Activated CD4-positive, alpha-beta T cell treated with anti-CD3 and anti-CD28 coated beads for 36 hours (primary cell): ENCODE measurements at regions of chr6 and their contacts with region 1.

Region 1: GRCh38 chr6:111259089-111259831 is 172.0 kb downstream of the SLC16A10 start:
- DNase-seq: peak; percentile 99
- ATAC-seq: peak; percentile 96
- H3K4me3 Mint-ChIP-seq: peak overlapping the region; percentile 78
- H3K27ac Mint-ChIP-seq: peak overlapping the region; percentile 56
- H3K4me1 Mint-ChIP-seq: peaks cover 30% of the 10 kb centered on the region
- H3K27me3 Mint-ChIP-seq: no peaks in the 10 kb centered on the region

Region 2: DNA sequence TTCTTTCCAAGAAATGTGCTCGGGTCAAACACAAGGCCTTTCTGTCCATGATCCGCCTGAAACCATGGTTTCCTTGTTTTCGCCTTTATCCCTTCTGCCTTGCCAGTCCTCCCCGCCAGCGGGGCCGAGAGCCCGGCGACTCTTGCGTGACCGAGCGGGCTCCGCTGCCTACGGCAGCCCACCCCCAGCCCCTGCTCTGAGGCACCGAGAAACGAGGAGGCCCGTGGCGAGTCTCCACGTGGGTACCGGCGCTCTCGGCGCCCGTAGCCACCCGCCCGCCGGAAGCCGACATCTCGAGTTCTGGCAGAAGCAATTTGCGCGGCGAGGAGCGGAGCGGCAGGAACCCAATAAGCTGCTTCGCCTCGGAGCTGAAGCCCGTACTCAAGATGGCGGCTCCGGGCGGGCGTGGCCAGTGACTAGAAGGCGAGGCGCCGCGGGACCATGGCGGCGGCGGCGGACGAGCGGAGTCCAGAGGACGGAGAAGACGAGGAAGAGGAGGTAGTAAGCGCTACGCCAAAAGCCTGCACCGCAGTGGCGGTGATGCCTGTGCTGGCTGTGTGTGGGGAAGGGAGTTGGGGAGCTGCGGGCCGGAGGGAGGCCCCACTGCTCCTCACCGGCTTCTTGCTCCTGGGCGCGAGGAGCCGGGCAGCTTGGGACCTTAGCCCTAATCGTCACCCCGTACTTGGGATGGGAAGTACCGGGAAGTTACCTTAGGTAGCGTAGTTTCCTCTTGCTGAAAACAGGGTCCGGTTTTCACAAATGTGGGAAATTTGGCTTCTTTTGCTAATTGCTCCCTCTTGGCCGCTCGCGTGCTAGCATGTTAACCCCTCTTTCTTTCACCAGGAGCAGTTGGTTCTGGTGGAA is 300.7 kb before region 1 on chr6 and contains the start of gene GTF3C6:
- CTCF ChIA-PET with region 1: no interaction called
- POLR2A ChIA-PET with region 1: no interaction called
- intact Hi-C with region 1: loop called in 1 of 2 experiments (anchors 1 kb)
- DNase-seq: peak; percentile 97
- ATAC-seq: peak; percentile 100
- H3K4me3 Mint-ChIP-seq: peak within 1 kb of the TSS; percentile 90
- H3K27ac Mint-ChIP-seq: peak within 1 kb of the TSS; percentile 97
- H3K4me1 Mint-ChIP-seq: peaks cover 14% of the 10 kb centered on the region
- H3K27me3 Mint-ChIP-seq: peaks cover 1% of the 10 kb centered on the region
- total RNA-seq, gene GTF3C6: 93.0 to 106 TPM

Region 3: DNA sequence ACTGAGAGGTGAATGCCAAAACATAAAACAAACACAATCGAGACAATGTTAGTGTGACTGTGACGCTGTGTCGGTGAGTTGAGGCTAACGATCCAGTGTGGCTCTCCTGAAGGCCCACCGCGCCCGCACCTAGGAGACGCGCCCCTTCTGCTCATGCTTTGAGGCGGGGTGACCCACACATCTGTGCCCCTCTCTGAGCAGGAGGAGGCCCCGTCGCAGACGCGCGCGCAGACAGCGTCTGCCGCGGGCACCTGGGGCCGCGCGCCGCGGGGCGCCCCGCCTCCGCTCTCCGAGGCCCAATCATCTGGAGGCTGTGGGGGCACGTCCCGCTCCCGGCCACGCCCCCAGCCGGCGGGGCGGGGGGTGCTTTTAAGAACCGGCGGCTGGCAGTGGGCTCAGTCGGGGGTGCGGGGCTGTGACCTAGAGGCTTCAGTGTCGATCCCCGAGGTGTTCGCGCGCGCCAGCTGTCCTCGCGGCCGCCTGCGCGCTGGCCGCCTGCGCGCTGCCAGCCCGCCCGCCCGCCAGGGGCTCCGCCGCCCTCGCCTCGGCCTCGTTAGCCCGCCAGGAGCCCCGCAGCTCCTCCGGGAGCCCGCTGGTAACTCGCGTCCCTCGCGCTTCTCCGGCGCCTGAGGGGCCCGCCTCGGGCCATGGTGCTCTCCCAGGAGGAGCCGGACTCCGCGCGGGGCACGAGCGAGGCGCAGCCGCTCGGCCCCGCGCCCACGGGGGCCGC is 172.0 kb before region 1 on chr6 and contains the start of gene SLC16A10:
- CTCF ChIA-PET with region 1: interaction called, 5 read pairs
- POLR2A ChIA-PET with region 1: no interaction called
- intact Hi-C with region 1: loop called in 1 of 2 experiments (anchors 1 kb)
- DNase-seq: peak; percentile 87
- ATAC-seq: peak; percentile 90
- H3K4me3 Mint-ChIP-seq: peak within 1 kb of the TSS; percentile 91
- H3K27ac Mint-ChIP-seq: peak within 1 kb of the TSS; percentile 90
- H3K4me1 Mint-ChIP-seq: peaks cover 37% of the 10 kb centered on the region
- H3K27me3 Mint-ChIP-seq: no peaks in the 10 kb centered on the region
- total RNA-seq, gene SLC16A10: 6.2 to 7.0 TPM

Region 4: GRCh38 chr6:111534231-111534751 is 275.0 kb after region 1 on chr6:
- CTCF ChIA-PET with region 1: no interaction called
- POLR2A ChIA-PET with region 1: interaction called, 3 read pairs
- intact Hi-C with region 1: loop called in 1 of 2 experiments (anchors 1 kb)
- DNase-seq: no peak
- ATAC-seq: no peak
- H3K4me3 Mint-ChIP-seq: no peak overlapping the region
- H3K27ac Mint-ChIP-seq: no peak overlapping the region
- H3K4me1 Mint-ChIP-seq: peaks cover 39% of the 10 kb centered on the region
- H3K27me3 Mint-ChIP-seq: no peaks in the 10 kb centered on the region

Region 5: GRCh38 chr6:111605100-111605751 is 346.0 kb after region 1 on chr6:
- CTCF ChIA-PET with region 1: interaction called, 6 read pairs
- POLR2A ChIA-PET with region 1: interaction called, 12 read pairs
- intact Hi-C with region 1: loop called in 1 of 2 experiments (anchors 1 kb)
- DNase-seq: peak; percentile 52
- ATAC-seq: peak; percentile 45
- H3K4me3 Mint-ChIP-seq: peak overlapping the region; percentile 80
- H3K27ac Mint-ChIP-seq: peak overlapping the region; percentile 99
- H3K4me1 Mint-ChIP-seq: peaks cover 39% of the 10 kb centered on the region
- H3K27me3 Mint-ChIP-seq: no peaks in the 10 kb centered on the region

Region 6: DNA sequence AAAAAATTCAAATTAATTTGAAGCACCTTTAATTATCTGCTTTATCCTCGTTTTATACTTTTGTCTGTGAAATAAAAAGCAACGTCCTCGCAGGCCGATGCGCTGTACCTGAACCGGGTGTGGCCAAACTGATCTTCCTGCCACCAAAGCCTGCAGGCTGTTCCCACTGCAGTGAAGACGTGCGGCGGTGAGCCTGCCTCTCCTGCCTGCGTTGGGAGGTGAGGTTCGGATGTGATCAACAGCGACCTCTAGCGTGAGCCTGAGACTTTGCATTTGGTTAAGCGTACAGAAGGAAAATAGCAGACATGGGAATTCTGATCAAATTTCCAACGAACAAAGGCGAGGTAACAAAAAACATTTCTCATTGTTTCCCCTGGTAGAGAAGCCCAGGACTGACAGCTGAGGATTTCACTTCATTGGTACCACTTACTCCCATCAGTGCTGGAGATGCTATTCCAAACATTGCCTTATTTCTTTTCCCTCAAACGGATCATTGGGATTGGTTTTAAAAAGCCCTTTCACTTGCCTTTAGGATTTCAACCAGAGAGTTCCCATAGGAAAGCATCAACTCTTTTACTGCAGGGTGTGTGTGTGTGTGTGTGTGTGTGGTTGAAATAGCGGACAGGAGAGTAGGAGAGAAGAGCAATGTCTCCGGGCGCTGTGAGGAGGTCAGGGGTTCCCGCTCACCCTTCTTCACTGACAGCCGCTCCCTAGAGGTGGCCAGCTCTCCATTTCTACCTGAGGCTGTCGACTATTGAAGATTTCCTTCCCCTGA is 738.0 kb after region 1 on chr6:
- CTCF ChIA-PET with region 1: no interaction called
- POLR2A ChIA-PET with region 1: no interaction called
- intact Hi-C with region 1: loop called in 1 of 2 experiments (anchors 2 kb)
- DNase-seq: peak; percentile 89
- ATAC-seq: peak; percentile 71
- H3K4me3 Mint-ChIP-seq: peak overlapping the region; percentile 43
- H3K27ac Mint-ChIP-seq: peak overlapping the region; percentile 72
- H3K4me1 Mint-ChIP-seq: peaks cover 51% of the 10 kb centered on the region
- H3K27me3 Mint-ChIP-seq: no peaks in the 10 kb centered on the region